Activated CD4-positive, alpha-beta T cell treated with anti-CD3 and anti-CD28 coated beads for 36 hours (primary cell): ENCODE measurements at regions of chr17 and their contacts with region 1.

Region 1: GRCh38 chr17:63549946-63550807 is at the start of gene DCAF7:
- DNase-seq: peak; percentile 100
- ATAC-seq: peak; percentile 94
- H3K4me3 Mint-ChIP-seq: peak within 1 kb of the TSS; percentile 91
- H3K27ac Mint-ChIP-seq: peak within 1 kb of the TSS; percentile 96
- H3K4me1 Mint-ChIP-seq: peaks cover 32% of the 10 kb centered on the region
- H3K27me3 Mint-ChIP-seq: no peaks in the 10 kb centered on the region
- total RNA-seq, gene DCAF7: 106 to 117 TPM

Region 2: DNA sequence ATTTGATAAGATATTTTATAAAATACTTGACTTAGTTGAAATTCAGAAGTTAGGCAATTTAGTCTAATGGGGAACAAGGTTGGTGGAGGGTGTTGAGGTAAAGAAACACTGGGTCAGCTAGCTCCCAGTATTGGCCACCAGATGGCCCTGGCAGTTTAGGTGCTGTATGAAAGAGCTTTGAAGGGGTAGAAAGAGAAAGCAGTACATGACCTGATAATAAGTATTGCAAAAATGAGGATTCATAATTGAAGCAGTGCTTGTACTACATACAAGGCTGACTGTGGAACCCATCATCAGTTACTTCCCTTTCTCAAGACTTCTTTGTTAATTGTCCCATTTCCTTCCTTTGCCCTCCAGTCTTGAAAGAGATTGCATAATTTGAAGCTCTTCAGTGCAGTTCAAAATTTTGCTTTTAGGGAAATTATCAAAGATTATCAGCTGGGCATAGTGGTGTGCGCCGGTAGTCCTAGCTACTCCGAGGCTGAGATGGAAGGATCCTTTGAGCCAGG is 554.7 kb before region 1 on chr17:
- CTCF ChIA-PET with region 1: no interaction called
- POLR2A ChIA-PET with region 1: no interaction called
- intact Hi-C with region 1: no loop called
- DNase-seq: peak; percentile 59
- ATAC-seq: peak; percentile 91
- H3K4me3 Mint-ChIP-seq: no peak overlapping the region
- H3K27ac Mint-ChIP-seq: no peak overlapping the region
- H3K4me1 Mint-ChIP-seq: peaks cover 10% of the 10 kb centered on the region
- H3K27me3 Mint-ChIP-seq: no peaks in the 10 kb centered on the region

Region 3: DNA sequence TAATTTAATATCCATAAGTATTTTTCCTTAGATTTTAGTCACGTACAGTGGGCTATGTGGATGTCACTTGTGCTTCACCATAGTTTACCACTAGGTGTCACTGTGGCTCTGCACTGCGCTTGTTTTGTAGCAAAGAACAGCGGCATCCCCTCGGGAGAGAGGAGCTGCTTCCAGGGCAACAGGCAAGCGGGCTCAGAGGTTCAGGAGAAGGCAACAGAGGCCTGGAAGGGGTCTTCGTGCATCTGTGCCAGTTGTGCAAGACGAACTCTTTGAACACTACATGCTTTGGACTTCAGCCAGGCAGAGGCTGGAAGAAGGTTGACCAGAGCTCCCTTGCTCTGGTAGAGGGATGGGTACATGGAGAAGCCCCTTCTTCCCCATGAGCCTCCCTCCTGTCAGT is 124.7 kb before region 1 on chr17:
- CTCF ChIA-PET with region 1: interaction called, 14 read pairs
- POLR2A ChIA-PET with region 1: no interaction called
- intact Hi-C with region 1: no loop called
- DNase-seq: peak; percentile 82
- ATAC-seq: peak; percentile 93
- H3K4me3 Mint-ChIP-seq: no peak overlapping the region
- H3K27ac Mint-ChIP-seq: no peak overlapping the region
- H3K4me1 Mint-ChIP-seq: peaks cover 27% of the 10 kb centered on the region
- H3K27me3 Mint-ChIP-seq: no peaks in the 10 kb centered on the region

Region 4: GRCh38 chr17:63478791-63479494 is 71.2 kb before region 1 on chr17:
- CTCF ChIA-PET with region 1: no interaction called
- POLR2A ChIA-PET with region 1: interaction called, 4 read pairs
- intact Hi-C with region 1: loop called in 1 of 2 experiments (anchors 2 kb)
- DNase-seq: peak; percentile 89
- ATAC-seq: peak; percentile 92
- H3K4me3 Mint-ChIP-seq: no peak overlapping the region
- H3K27ac Mint-ChIP-seq: no peak overlapping the region
- H3K4me1 Mint-ChIP-seq: peaks cover 12% of the 10 kb centered on the region
- H3K27me3 Mint-ChIP-seq: peaks cover 27% of the 10 kb centered on the region

Region 5: GRCh38 chr17:63514974-63515373 is 35.2 kb before region 1 on chr17:
- CTCF ChIA-PET with region 1: no interaction called
- POLR2A ChIA-PET with region 1: no interaction called
- intact Hi-C with region 1: no loop called
- DNase-seq: no peak
- ATAC-seq: peak; percentile 39
- H3K4me3 Mint-ChIP-seq: no peak overlapping the region
- H3K27ac Mint-ChIP-seq: no peak overlapping the region
- H3K4me1 Mint-ChIP-seq: peaks cover 11% of the 10 kb centered on the region
- H3K27me3 Mint-ChIP-seq: peaks cover 3% of the 10 kb centered on the region

Region 6: DNA sequence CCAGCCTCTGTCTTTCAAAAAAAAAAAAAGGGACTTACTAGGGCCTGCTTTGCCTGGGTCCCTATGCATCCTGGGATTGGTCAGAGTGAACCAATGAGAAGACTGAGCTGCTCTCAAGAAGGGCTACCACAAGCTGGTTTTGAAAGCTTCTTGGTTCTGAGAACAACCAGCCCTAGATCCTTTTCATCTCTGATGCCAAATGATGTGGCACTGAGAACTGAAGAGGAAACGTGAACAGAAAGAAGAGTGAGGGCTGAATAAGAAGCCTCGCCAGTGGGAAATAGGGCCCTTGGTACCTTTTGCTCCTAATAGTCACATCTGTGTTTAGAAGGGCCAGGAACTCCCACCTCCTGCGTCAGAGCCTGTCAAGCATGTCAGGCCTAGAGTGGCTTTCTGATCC is 61.2 kb after region 1 on chr17:
- CTCF ChIA-PET with region 1: interaction called, 8 read pairs
- POLR2A ChIA-PET with region 1: interaction called, 4 read pairs
- intact Hi-C with region 1: loop called (anchors 1 kb)
- DNase-seq: peak; percentile 59
- ATAC-seq: peak; percentile 85
- H3K4me3 Mint-ChIP-seq: peak overlapping the region; percentile 51
- H3K27ac Mint-ChIP-seq: peak overlapping the region; percentile 91
- H3K4me1 Mint-ChIP-seq: peaks cover 27% of the 10 kb centered on the region
- H3K27me3 Mint-ChIP-seq: no peaks in the 10 kb centered on the region

Region 7: DNA sequence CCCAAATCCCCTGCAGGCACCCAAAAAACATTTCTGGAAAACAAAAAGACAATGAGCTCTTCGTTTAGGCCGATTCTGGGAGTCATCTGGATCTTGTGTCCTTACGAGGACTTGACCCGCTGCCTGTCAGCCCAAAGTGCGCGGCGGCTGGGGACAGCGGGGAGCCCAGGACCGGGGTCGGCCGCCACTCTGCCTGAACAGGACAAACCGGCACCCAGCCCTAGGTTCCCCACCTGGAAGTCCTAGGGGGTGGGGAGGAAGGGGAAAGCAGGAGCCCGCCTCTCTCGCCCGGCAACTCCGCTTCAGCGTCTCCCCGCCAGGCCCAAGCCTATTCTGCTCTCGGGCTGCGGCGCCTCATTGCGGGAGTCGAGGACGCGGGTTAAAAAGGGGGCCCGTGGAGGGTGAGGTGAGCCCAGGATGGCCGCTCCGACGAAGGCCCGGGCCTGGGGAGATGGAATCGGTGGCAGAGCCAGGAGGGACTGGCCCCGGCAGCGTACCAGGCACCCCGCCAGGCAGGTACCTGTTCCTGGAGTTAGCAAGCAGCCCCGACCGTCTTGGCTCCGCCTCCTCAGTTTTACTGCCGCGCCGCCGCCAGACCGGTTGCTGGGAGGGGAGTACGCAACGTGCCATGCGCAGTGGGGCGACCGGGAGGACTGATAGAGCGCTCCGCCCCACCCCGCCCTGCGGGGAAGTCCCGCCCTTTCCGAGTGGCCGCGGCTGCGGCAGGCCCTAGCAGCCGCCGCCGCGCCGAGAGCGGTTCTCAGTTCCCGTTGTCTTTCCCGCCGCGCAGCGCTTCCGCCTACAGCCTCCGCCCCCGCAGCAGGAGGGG is 191.3 kb after region 1 on chr17 and contains the start of gene STRADA:
- CTCF ChIA-PET with region 1: no interaction called
- POLR2A ChIA-PET with region 1: no interaction called
- intact Hi-C with region 1: loop called in 1 of 2 experiments (anchors 1 kb)
- DNase-seq: peak; percentile 100
- ATAC-seq: peak; percentile 94
- H3K4me3 Mint-ChIP-seq: peak within 1 kb of the TSS; percentile 91
- H3K27ac Mint-ChIP-seq: peak within 1 kb of the TSS; percentile 95
- H3K4me1 Mint-ChIP-seq: peaks cover 29% of the 10 kb centered on the region
- H3K27me3 Mint-ChIP-seq: no peaks in the 10 kb centered on the region
- total RNA-seq, gene STRADA: 51.0 to 53.6 TPM

Region 8: GRCh38 chr17:63834431-63835166 is 284.4 kb after region 1 on chr17:
- CTCF ChIA-PET with region 1: no interaction called
- POLR2A ChIA-PET with region 1: no interaction called
- intact Hi-C with region 1: loop called in 1 of 2 experiments (anchors 10 kb)
- DNase-seq: peak; percentile 77
- ATAC-seq: peak; percentile 89
- H3K4me3 Mint-ChIP-seq: no peak overlapping the region
- H3K27ac Mint-ChIP-seq: peak overlapping the region; percentile 75
- H3K4me1 Mint-ChIP-seq: peaks cover 42% of the 10 kb centered on the region
- H3K27me3 Mint-ChIP-seq: no peaks in the 10 kb centered on the region